CD4-positive, alpha-beta memory T cell (primary cell): ENCODE measurements at regions of chr1 and their contacts with region 1.

Region 1: GRCh38 chr1:206489980-206490770 is 17.2 kb upstream of the RASSF5 start:
- DNase-seq: peak; percentile 46 to 62 (median 57)
- H3K4me3 ChIP-seq: no peak overlapping the region
- H3K4me3 Mint-ChIP-seq: no peak overlapping the region
- H3K27ac ChIP-seq: no peak overlapping the region
- H3K27ac Mint-ChIP-seq: peak overlapping the region in 4 of 7 donors; percentile 17 to 78 (median 56)
- H3K4me1 ChIP-seq: peaks cover under 1% of the 10 kb centered on the region
- H3K4me1 Mint-ChIP-seq: peaks cover 0 to 5% (median 0%) of the 10 kb centered on the region in 4 donors
- H3K27me3 ChIP-seq: no peaks in the 10 kb centered on the region
- H3K27me3 Mint-ChIP-seq: no peaks in the 10 kb centered on the region

Region 2: GRCh38 chr1:206479183-206480125 is 10.7 kb before region 1 on chr1:
- CTCF ChIA-PET with region 1: interaction called, 11 read pairs
- POLR2A ChIA-PET with region 1: no interaction called
- intact Hi-C with region 1: no loop called
- DNase-seq: peak; percentile 46 to 67 (median 52)
- H3K4me3 ChIP-seq: no peak overlapping the region
- H3K4me3 Mint-ChIP-seq: no peak overlapping the region
- H3K27ac ChIP-seq: no peak overlapping the region
- H3K27ac Mint-ChIP-seq: peak overlapping the region in 5 of 7 donors; percentile 8 to 80 (median 78)
- H3K4me1 ChIP-seq: peaks cover 21% of the 10 kb centered on the region
- H3K4me1 Mint-ChIP-seq: peaks cover 5 to 18% (median 12%) of the 10 kb centered on the region in 4 donors
- H3K27me3 ChIP-seq: no peaks in the 10 kb centered on the region
- H3K27me3 Mint-ChIP-seq: no peaks in the 10 kb centered on the region

Region 3: DNA sequence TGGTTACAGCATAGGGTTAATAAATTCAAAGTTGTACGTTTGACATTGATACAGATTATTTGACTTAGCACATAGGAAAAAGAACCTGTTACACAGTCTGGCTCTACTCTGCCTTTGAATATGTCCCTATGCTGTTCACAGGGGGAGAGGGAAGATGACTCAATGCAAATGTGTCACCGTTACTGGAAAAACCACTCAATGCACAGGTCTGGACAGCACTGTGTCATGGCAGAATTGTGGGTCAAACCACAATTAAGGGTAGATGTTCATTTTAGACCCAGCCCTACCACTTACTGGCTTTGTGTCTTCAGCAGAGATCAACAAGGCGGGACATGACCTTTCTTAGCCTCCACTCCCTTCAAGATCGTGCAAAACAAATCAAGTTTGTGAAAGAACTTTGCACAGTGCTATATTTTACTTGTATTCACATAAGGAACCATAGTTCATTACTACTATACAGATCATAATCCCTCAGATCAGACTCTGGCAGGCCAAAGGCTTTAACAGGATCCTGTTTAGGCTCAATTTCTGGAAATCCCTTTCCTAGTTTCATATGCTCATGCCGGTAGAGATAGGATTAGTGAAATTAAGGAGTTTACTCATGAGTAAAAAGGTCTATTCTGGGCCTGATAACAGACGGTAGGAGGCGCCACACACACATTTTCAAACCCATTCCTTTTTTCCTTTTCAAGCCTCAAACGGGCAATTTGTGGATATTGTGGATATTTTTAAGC is 100.0 kb after region 1 on chr1:
- CTCF ChIA-PET with region 1: interaction called, 6 read pairs
- POLR2A ChIA-PET with region 1: no interaction called
- intact Hi-C with region 1: loop called (anchors 1 kb)
- DNase-seq: peak; percentile 52 to 87 (median 62)
- H3K4me3 ChIP-seq: no peak overlapping the region
- H3K4me3 Mint-ChIP-seq: peak overlapping the region in 6 of 8 donors; percentile 0 to 66 (median 30)
- H3K27ac ChIP-seq: peak overlapping the region; percentile 44
- H3K27ac Mint-ChIP-seq: peak overlapping the region; percentile 73 to 94 (median 87)
- H3K4me1 ChIP-seq: peaks cover 35% of the 10 kb centered on the region
- H3K4me1 Mint-ChIP-seq: peaks cover 28 to 57% (median 33%) of the 10 kb centered on the region in 4 donors
- H3K27me3 ChIP-seq: no peaks in the 10 kb centered on the region
- H3K27me3 Mint-ChIP-seq: no peaks in the 10 kb centered on the region

Region 4: GRCh38 chr1:206770531-206771337 is 280.6 kb after region 1 on chr1 and contains the start of gene IL19:
- CTCF ChIA-PET with region 1: no interaction called
- POLR2A ChIA-PET with region 1: no interaction called
- intact Hi-C with region 1: no loop called
- DNase-seq: no peak
- H3K4me3 ChIP-seq: peak within 1 kb of the TSS in 1 of 2 donors; percentile 16
- H3K4me3 Mint-ChIP-seq: peak within 1 kb of the TSS in 7 of 8 donors; percentile 27 to 85 (median 67)
- H3K27ac ChIP-seq: peak within 1 kb of the TSS; percentile 12
- H3K27ac Mint-ChIP-seq: peak within 1 kb of the TSS; percentile 68 to 90 (median 85)
- H3K4me1 ChIP-seq: peaks cover 70% of the 10 kb centered on the region
- H3K4me1 Mint-ChIP-seq: peaks cover 57 to 84% (median 71%) of the 10 kb centered on the region in 4 donors
- H3K27me3 ChIP-seq: no peaks in the 10 kb centered on the region
- H3K27me3 Mint-ChIP-seq: no peaks in the 10 kb centered on the region
- total RNA-seq, gene IL19: not detected